ENCODE measurements at regions of chrX and their contacts with region 1.

Region 1: DNA sequence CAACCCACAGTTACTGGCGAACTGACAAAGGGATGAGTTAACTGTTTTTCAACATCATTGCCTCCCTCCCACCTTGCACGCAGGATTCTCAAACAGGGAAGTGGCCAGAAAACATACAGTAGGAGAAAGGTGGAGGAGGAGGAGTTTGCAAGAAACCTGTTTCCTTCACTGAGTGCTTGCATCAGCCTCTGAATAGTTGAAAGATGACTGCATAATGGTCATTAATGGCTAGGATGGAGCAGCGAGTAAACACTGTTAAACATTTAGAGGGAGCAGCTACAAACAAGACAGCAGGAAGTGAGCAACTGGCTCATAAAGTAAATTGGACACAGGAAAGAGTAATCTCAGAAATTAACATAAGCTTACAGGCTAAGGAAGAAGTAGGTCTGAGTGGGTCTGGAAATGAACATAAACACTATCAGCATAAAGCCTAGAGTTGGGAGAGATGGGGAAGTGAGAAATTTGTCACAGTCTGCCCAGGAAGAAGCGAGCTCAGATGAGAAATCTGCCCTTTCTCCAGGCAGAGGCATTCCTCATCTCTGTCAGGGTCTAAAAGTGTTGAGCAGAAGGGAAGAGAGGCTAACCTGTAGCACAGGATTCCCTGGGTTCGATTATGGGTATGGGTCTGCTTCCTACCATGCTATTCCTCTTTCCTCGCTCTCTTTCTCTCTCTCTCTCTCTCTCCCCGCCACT is 38.6 kb downstream of the TRPC5OS start:
- DNase-seq: no peak
- ATAC-seq: no peak
- H3K4me3 Mint-ChIP-seq: no peak overlapping the region
- H3K27ac Mint-ChIP-seq: no peak overlapping the region
- H3K4me1 Mint-ChIP-seq: no peaks in the 10 kb centered on the region
- H3K27me3 Mint-ChIP-seq: no peaks in the 10 kb centered on the region
- CTCF ChIP-seq: no peak

Region 2: DNA sequence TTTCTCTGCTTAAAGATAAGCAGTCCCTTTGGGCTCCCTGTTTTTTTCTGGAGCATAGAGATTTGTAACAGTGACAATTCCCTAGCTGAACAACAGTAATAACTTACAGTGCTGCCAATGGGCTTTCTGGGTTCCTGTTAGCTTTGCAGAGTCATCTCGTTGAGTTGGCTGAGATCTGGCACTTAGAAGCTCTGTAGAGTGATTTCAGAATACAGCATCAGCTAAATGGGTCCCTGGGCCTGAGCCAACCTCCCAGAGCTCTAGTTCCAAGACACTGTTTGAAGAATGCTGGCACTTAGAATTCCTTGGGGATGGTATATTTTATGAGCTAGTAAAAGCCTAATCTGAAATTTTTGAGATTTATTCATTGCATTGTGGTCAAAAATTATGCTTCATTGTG is 446.6 kb before region 1 on chrX:
- CTCF ChIA-PET with region 1: no interaction called
- POLR2A ChIA-PET with region 1: no interaction called
- intact Hi-C with region 1: no loop called
- DNase-seq: no peak
- ATAC-seq: no peak
- H3K4me3 Mint-ChIP-seq: no peak overlapping the region
- H3K27ac Mint-ChIP-seq: no peak overlapping the region
- H3K4me1 Mint-ChIP-seq: no peaks in the 10 kb centered on the region
- H3K27me3 Mint-ChIP-seq: no peaks in the 10 kb centered on the region
- CTCF ChIP-seq: no peak

Region 3: DNA sequence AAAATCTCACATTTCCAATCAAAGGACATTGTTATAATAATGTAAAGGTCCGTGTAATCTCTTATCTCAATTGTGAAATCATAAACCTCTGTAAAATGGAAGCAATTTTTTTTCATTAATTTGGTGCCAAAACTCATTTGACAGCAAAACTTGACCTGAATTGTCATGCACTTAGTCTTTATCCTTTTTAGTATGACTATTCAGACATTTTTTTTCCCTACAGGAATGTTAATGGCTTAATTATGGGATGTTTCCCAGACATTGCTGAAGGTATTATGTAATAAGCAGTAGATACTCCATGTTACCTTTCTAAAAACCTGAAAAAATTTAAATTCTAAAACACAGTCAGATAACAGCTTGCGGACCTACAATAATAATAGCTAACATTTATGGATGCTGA is 536.3 kb after region 1 on chrX:
- CTCF ChIA-PET with region 1: no interaction called
- POLR2A ChIA-PET with region 1: no interaction called
- intact Hi-C with region 1: loop called (anchors 5 kb)
- DNase-seq: no peak
- ATAC-seq: no peak
- H3K4me3 Mint-ChIP-seq: no peak overlapping the region
- H3K27ac Mint-ChIP-seq: no peak overlapping the region
- H3K4me1 Mint-ChIP-seq: no peaks in the 10 kb centered on the region
- H3K27me3 Mint-ChIP-seq: no peaks in the 10 kb centered on the region
- CTCF ChIP-seq: no peak